K562 (cell line): ENCODE measurements at regions of chr1 and their contacts with region 1.

Region 1: DNA sequence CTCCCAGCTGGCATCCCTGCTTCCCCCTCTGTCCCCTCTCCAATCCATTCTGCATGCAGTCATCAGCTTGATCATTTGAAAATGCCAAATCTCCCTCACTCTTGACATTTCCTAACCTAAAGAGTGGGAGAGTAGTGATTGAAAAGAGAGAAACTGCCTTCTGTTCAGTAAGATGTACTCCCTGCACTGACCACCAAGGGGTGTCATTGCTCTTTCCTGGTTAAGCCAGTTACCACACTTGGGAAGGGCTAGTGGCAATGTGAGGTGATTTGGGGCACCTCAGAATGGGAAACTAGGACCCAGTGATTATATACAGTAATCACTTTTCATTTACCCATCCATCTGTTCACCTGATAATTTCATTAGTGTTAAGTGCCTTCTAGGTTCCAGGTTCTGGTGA is 6.9 kb upstream of the TMEM269 start:
- DNase-seq: peak; percentile 75 to 80 (median 76)
- ATAC-seq: peak; percentile 94
- H3K4me3 ChIP-seq: no peak overlapping the region
- H3K27ac ChIP-seq: no peak overlapping the region
- H3K4me1 ChIP-seq: no peaks in the 10 kb centered on the region; a peak in 1 of 5 replicates
- H3K27me3 ChIP-seq: no peaks in the 10 kb centered on the region
- CTCF ChIP-seq: peak; percentile 84 to 94 (median 94)
- EP300 ChIP-seq: no peak
- POLR2A ChIP-seq: no peak
- RAD21 ChIP-seq: peak; percentile 92 to 97

Region 2: GRCh38 chr1:42657971-42658879 is 119.6 kb before region 1 on chr1 and contains the start of gene PPIH:
- CTCF ChIA-PET with region 1: no interaction called
- POLR2A ChIA-PET with region 1: no interaction called
- in situ Hi-C with region 1: no loop called
- intact Hi-C with region 1: no loop called
- DNase-seq: peak; percentile 95 to 98 (median 96)
- ATAC-seq: peak; percentile 99
- H3K4me3 ChIP-seq: peak within 1 kb of the TSS; percentile 58
- H3K27ac ChIP-seq: peak within 1 kb of the TSS; percentile 86
- H3K4me1 ChIP-seq: peaks cover 0 to 16% of the 10 kb centered on the region in 2 experiments
- H3K27me3 ChIP-seq: no peaks in the 10 kb centered on the region
- CTCF ChIP-seq: peak in 2 of 3 experiments; percentile 34 to 54; a peak in 4 of 6 replicates
- EP300 ChIP-seq: peak; percentile 53
- POLR2A ChIP-seq: peak; percentile 96
- RAD21 ChIP-seq: no peak
- polyA plus RNA-seq, gene PPIH: 221 to 265 TPM

Region 3: DNA sequence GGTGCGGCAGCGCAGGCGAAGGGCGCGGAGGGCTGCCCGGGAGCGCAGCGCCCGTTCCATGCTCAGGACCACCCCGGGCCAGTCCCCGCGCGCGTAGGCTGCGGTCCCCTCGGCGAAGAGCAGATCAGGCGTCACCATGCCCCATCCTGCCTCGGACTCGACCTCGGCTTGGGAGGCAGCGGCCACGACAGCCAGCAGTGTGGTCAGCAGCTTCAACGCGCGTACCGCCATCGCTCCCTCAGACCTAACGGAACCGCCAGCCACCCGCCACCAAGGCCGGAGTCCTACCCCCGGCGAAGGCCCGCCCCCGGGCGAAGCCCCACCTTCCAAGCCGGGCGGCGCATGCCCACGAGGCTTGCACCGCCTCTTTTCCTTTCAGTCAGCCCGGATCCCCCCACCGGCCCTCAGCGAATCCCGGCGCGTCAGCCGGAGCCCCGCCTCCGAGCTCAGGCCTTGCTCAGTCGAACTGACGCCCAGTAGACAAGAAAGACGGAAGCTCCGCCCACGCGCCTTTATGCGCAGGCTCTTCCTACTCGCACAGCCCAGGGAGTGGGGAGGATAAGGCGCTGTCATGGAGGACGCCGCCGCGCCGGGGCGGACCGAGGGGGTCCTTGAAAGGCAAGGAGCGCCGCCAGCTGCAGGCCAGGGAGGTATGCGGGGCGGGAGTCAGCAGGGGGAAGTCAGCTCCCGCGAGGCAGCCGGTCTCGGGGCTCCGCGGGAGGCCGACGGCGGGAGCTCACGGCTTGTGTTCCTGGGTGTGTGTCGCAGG is 10.9 kb before region 1 on chr1 and contains the starts of genes C1orf50 and P3H1:
- CTCF ChIA-PET with region 1: no interaction called
- POLR2A ChIA-PET with region 1: interaction called, 20 read pairs
- in situ Hi-C with region 1: no loop called
- intact Hi-C with region 1: no loop called
- DNase-seq: peak; percentile 96 to 100 (median 96)
- ATAC-seq: peak; percentile 93
- H3K4me3 ChIP-seq: peak within 1 kb of the TSS; percentile 76
- H3K27ac ChIP-seq: peak within 1 kb of the TSS; percentile 81
- H3K4me1 ChIP-seq: peaks cover 12 to 24% of the 10 kb centered on the region in 2 experiments; a peak in 3 of 5 replicates
- H3K27me3 ChIP-seq: no peaks in the 10 kb centered on the region
- CTCF ChIP-seq: peak in 1 of 3 experiments; percentile 10; a peak in 2 of 6 replicates
- EP300 ChIP-seq: no peak; the same call in 1 of the 2 replicates
- POLR2A ChIP-seq: peak; percentile 98
- RAD21 ChIP-seq: no peak
- polyA plus RNA-seq, gene C1orf50: 0.55 to 1.8 TPM
- polyA plus RNA-seq, gene P3H1: 1.7 to 5.0 TPM

Region 4: GRCh38 chr1:42913426-42914091 is 135.7 kb after region 1 on chr1:
- CTCF ChIA-PET with region 1: interaction called, 3 read pairs
- POLR2A ChIA-PET with region 1: interaction called, 4 read pairs
- in situ Hi-C with region 1: no loop called
- intact Hi-C with region 1: loop called (anchors 2 kb)
- DNase-seq: peak; percentile 66 to 86 (median 69)
- ATAC-seq: peak; percentile 96
- H3K4me3 ChIP-seq: no peak overlapping the region
- H3K27ac ChIP-seq: no peak overlapping the region
- H3K4me1 ChIP-seq: peaks cover 0 to 7% of the 10 kb centered on the region in 2 experiments; a peak in 1 of 5 replicates
- H3K27me3 ChIP-seq: no peaks in the 10 kb centered on the region
- CTCF ChIP-seq: peak; percentile 67 to 85 (median 83)
- EP300 ChIP-seq: no peak
- POLR2A ChIP-seq: no peak
- RAD21 ChIP-seq: peak; percentile 83 to 99